GM10248 (cell line): ENCODE measurements at regions of chr4 and their contacts with region 1.

Region 1: GRCh38 chr4:151665022-151665784 is 95.6 kb downstream of the GATB start:
- DNase-seq: no peak
- CTCF ChIP-seq: no peak

Region 2: GRCh38 chr4:151524610-151525009 is 140.6 kb before region 1 on chr4:
- CTCF ChIA-PET with region 1: no interaction called
- POLR2A ChIA-PET with region 1: no interaction called
- DNase-seq: no peak
- CTCF ChIP-seq: no peak

Region 3: DNA sequence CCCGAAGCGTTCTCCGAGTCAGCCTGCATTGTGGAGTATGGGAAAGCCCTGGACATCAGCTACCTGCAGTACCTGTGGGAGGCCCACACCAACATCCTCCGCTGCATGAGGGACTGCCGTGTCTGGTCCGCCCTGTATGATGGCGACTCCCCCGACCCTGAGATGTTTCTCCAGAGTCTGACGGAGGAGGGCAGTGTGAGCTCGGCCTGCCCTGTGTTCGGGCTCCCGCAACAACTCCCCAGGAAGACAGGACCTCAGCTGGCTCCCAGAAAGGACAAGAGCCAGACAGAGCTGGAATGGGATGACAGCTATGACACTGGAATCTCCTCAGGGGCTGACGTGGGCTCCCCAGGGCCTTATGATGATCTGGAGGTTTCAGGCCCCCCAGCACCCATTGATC is 15.7 kb before region 1 on chr4:
- CTCF ChIA-PET with region 1: interaction called, 23 read pairs
- POLR2A ChIA-PET with region 1: no interaction called
- DNase-seq: no peak
- CTCF ChIP-seq: no peak

Region 4: GRCh38 chr4:151690876-151691275 is 25.7 kb after region 1 on chr4:
- CTCF ChIA-PET with region 1: no interaction called
- POLR2A ChIA-PET with region 1: no interaction called
- DNase-seq: no peak
- CTCF ChIP-seq: no peak

Region 5: DNA sequence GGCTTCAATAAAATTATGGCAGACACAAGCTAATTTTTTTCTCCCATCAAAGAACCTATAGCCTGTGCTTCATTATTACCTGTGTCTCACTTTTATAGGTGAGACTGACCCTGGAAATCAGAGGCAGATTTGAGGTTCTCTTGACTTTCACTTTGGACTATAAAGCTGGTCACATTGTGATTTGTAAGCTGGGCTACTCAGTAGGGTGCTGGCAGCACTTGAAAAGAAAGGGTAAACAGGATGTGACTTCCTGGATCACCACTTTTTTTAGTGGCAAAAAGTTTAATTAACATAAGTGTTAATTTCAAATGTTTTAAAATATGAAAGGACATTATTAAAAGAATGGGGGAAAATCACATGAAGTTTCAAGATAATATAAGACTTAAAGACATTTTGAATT is 146.2 kb after region 1 on chr4:
- CTCF ChIA-PET with region 1: no interaction called
- POLR2A ChIA-PET with region 1: no interaction called
- DNase-seq: no peak
- CTCF ChIP-seq: no peak